Caco-2 (cell line): ENCODE measurements at regions of chr12 and their contacts with region 1.

Region 1: GRCh38 chr12:105355752-105356151 is 25.3 kb downstream of the C12orf75 start:
- DNase-seq: peak in 1 of 2 experiments; percentile 21
- H3K4me3 ChIP-seq: no peak overlapping the region
- H3K4me3 Mint-ChIP-seq: peak overlapping the region; percentile 60
- H3K27ac Mint-ChIP-seq: peak overlapping the region; percentile 81
- H3K4me1 ChIP-seq: peaks cover 67% of the 10 kb centered on the region
- H3K4me1 Mint-ChIP-seq: peaks cover 46% of the 10 kb centered on the region
- H3K27me3 ChIP-seq: no peaks in the 10 kb centered on the region
- H3K27me3 Mint-ChIP-seq: no peaks in the 10 kb centered on the region
- CTCF ChIP-seq: no peak

Region 2: DNA sequence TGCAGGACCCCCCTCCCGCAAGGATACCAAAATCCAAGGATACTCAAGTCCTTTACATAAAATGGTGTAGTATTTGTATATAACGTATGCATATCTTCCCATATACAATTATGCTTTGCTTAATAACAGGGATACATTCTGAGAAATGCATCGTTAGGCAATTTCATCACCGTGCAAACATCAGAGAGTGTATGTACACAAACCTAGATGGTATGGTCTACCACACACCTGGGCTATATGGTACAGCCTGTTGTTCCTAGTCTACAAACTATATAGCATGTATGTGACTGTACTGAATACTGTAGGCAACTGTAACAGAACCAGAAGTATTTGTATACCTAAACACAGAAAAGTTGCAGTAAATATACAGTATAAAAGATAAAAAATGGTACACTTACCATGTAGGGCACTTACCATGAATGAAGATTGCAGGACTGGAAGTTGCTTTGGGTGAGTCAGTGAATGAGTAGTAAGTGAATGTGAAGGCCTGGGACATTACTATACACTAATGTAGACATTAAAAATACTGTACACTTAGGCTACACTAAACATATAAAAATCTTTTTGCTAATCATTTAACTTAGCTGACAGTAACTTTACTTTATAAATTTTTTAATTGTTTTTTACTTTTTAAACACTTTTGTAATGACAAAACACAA is 538.8 kb before region 1 on chr12:
- CTCF ChIA-PET with region 1: no interaction called
- POLR2A ChIA-PET with region 1: no interaction called
- intact Hi-C with region 1: no loop called
- DNase-seq: no peak
- H3K4me3 ChIP-seq: no peak overlapping the region
- H3K4me3 Mint-ChIP-seq: no peak overlapping the region
- H3K27ac Mint-ChIP-seq: no peak overlapping the region
- H3K4me1 ChIP-seq: no peaks in the 10 kb centered on the region
- H3K4me1 Mint-ChIP-seq: no peaks in the 10 kb centered on the region
- H3K27me3 ChIP-seq: no peaks in the 10 kb centered on the region
- H3K27me3 Mint-ChIP-seq: no peaks in the 10 kb centered on the region
- CTCF ChIP-seq: no peak

Region 3: DNA sequence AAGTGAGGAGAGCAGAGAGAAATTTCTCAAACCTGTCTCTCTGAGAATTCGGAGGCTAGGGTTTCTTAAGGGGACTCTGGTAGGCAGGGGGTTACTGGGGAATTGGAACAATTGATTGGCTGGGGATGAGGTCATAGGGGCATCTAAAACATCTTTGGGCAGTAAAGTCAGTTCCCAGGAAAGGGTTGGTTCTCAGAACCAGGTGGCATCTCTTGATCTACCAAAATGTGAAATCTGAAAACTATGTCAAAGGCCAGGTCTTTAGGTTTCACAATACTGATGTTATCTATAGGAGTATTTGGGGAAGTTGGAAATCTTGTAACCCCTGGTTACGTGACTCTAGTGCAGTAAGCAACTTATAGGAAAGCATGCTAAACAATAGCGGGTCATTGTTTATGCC is 18.4 kb before region 1 on chr12:
- CTCF ChIA-PET with region 1: no interaction called
- POLR2A ChIA-PET with region 1: no interaction called
- intact Hi-C with region 1: loop called (anchors 2 kb)
- DNase-seq: peak in 1 of 2 experiments; percentile 21
- H3K4me3 ChIP-seq: no peak overlapping the region
- H3K4me3 Mint-ChIP-seq: no peak overlapping the region
- H3K27ac Mint-ChIP-seq: peak overlapping the region; percentile 83
- H3K4me1 ChIP-seq: peaks cover 50% of the 10 kb centered on the region
- H3K4me1 Mint-ChIP-seq: peaks cover 25% of the 10 kb centered on the region
- H3K27me3 ChIP-seq: no peaks in the 10 kb centered on the region
- H3K27me3 Mint-ChIP-seq: no peaks in the 10 kb centered on the region
- CTCF ChIP-seq: no peak

Region 4: GRCh38 chr12:105445249-105446015 is 89.7 kb after region 1 on chr12:
- CTCF ChIA-PET with region 1: no interaction called
- POLR2A ChIA-PET with region 1: no interaction called
- intact Hi-C with region 1: no loop called
- DNase-seq: peak; percentile 50 to 69
- H3K4me3 ChIP-seq: no peak overlapping the region
- H3K4me3 Mint-ChIP-seq: no peak overlapping the region
- H3K27ac Mint-ChIP-seq: peak overlapping the region; percentile 88
- H3K4me1 ChIP-seq: peaks cover 45% of the 10 kb centered on the region
- H3K4me1 Mint-ChIP-seq: peaks cover 15% of the 10 kb centered on the region
- H3K27me3 ChIP-seq: no peaks in the 10 kb centered on the region
- H3K27me3 Mint-ChIP-seq: no peaks in the 10 kb centered on the region
- CTCF ChIP-seq: no peak